Natural killer cell (primary cell): ENCODE measurements at regions of chr19 and their contacts with region 1.

Region 1: GRCh38 chr19:11125994-11126685 is 29.4 kb downstream of the SPC24 start:
- DNase-seq: peak; percentile 67 to 88
- ATAC-seq: peak; percentile 68 to 72 (median 70)
- H3K4me3 ChIP-seq: no peak overlapping the region
- H3K4me3 Mint-ChIP-seq: no peak overlapping the region
- H3K27ac ChIP-seq: no peak overlapping the region
- H3K27ac Mint-ChIP-seq: peak overlapping the region in 1 of 2 donors; percentile 45
- H3K4me1 ChIP-seq: peaks cover 5% of the 10 kb centered on the region
- H3K4me1 Mint-ChIP-seq: peaks cover 6% of the 10 kb centered on the region in 2 donors
- H3K27me3 ChIP-seq: no peaks in the 10 kb centered on the region
- H3K27me3 Mint-ChIP-seq: no peaks in the 10 kb centered on the region
- CTCF ChIP-seq: peak; percentile 79

Region 2: DNA sequence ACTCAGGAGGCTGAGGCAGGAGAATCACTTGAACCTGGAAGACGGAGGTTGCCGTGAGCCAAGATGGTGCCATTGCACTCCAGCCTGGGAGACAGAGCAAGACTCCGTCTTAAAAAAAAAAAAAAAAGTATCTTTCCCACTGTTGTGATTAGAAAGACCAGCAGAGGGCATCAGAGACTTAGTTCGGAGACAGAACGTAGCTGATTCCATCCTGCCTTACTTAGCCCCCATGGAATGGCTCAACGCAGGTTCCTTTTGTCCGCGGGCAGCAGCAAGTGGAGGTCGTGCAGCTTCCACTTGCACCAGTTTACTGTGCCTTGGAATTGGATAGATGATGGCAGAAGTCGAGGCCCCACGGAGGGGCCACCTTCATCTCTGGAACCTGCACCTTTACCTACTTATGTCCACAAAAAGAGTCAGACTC is 189.5 kb before region 1 on chr19:
- intact Hi-C with region 1: loop called (anchors 5 kb)
- DNase-seq: peak in 1 of 2 donors; percentile 80
- ATAC-seq: peak; percentile 76 to 96 (median 89)
- H3K4me3 ChIP-seq: no peak overlapping the region
- H3K4me3 Mint-ChIP-seq: no peak overlapping the region
- H3K27ac ChIP-seq: no peak overlapping the region
- H3K27ac Mint-ChIP-seq: no peak overlapping the region
- H3K4me1 ChIP-seq: peaks cover 3% of the 10 kb centered on the region
- H3K4me1 Mint-ChIP-seq: peaks cover 0 to 5% of the 10 kb centered on the region in 2 donors
- H3K27me3 ChIP-seq: no peaks in the 10 kb centered on the region
- H3K27me3 Mint-ChIP-seq: no peaks in the 10 kb centered on the region
- CTCF ChIP-seq: peak; percentile 55

Region 3: DNA sequence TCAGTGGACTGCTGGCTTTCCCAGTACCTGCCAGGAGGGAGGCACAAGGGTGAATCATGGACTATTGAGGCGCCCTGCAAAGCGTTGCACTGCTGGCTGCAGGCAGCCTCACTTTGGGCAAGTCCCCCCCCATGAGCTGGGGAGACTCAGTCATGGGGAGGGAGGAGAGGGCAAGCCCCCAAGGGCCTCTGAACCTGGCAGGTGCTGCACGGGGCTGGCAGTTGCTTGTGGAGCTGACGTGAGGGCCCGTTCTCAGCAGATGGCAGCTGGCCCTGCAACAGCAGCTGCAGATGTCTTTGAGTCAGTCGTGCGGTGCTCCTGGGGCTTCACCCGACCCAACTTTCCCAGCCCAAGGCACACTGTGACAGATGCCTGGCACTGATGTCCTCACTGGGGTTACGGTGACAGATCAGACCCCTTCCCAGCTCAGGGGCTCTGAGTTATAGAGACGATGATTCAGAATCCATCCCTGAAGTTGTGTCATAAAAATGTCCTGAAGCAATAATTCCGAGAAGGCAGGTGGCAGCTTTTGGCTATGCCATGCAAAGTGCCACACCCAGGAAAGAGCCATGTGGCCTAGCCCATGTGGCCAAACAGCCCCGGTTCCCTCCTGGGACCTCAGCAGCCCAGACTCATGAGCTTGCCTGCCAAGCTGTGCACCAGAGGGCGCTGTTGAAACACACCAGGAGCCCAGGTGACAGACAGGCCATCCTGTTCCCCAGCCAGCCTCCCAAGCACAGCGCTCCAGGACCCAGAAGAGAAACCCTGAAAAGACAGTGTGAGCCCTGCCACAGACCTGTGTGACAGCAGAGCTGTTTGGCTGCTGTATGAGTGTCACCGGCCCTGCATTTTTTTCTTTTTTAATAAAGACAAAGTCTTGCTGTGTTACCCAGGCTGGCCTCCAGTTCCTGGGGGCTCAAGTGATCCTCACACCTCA is 90.4 kb before region 1 on chr19:
- intact Hi-C with region 1: loop called (anchors 1 kb)
- DNase-seq: peak; percentile 80 to 92
- ATAC-seq: peak; percentile 74 to 88 (median 86)
- H3K4me3 ChIP-seq: no peak overlapping the region
- H3K4me3 Mint-ChIP-seq: no peak overlapping the region
- H3K27ac ChIP-seq: no peak overlapping the region
- H3K27ac Mint-ChIP-seq: peak overlapping the region in 1 of 2 donors; percentile 47
- H3K4me1 ChIP-seq: peaks cover 27% of the 10 kb centered on the region
- H3K4me1 Mint-ChIP-seq: peaks cover 18 to 20% of the 10 kb centered on the region in 2 donors
- H3K27me3 ChIP-seq: no peaks in the 10 kb centered on the region
- H3K27me3 Mint-ChIP-seq: no peaks in the 10 kb centered on the region
- CTCF ChIP-seq: peak; percentile 88

Region 4: GRCh38 chr19:11111117-11111774 is 14.9 kb before region 1 on chr19:
- intact Hi-C with region 1: no loop called
- DNase-seq: no peak
- ATAC-seq: peak in 1 of 3 donors; percentile 14
- H3K4me3 ChIP-seq: no peak overlapping the region
- H3K4me3 Mint-ChIP-seq: no peak overlapping the region
- H3K27ac ChIP-seq: no peak overlapping the region
- H3K27ac Mint-ChIP-seq: peak overlapping the region in 1 of 2 donors; percentile 16
- H3K4me1 ChIP-seq: no peaks in the 10 kb centered on the region
- H3K4me1 Mint-ChIP-seq: peaks cover 0 to 6% of the 10 kb centered on the region in 2 donors
- H3K27me3 ChIP-seq: no peaks in the 10 kb centered on the region
- H3K27me3 Mint-ChIP-seq: no peaks in the 10 kb centered on the region
- CTCF ChIP-seq: no peak

Region 5: GRCh38 chr19:11152318-11153062 is 26.4 kb after region 1 on chr19:
- intact Hi-C with region 1: no loop called
- DNase-seq: no peak
- ATAC-seq: no peak
- H3K4me3 ChIP-seq: no peak overlapping the region
- H3K4me3 Mint-ChIP-seq: no peak overlapping the region
- H3K27ac ChIP-seq: no peak overlapping the region
- H3K27ac Mint-ChIP-seq: no peak overlapping the region
- H3K4me1 ChIP-seq: peaks cover 15% of the 10 kb centered on the region
- H3K4me1 Mint-ChIP-seq: peaks cover 8 to 17% of the 10 kb centered on the region in 2 donors
- H3K27me3 ChIP-seq: no peaks in the 10 kb centered on the region
- H3K27me3 Mint-ChIP-seq: no peaks in the 10 kb centered on the region
- CTCF ChIP-seq: no peak

Region 6: DNA sequence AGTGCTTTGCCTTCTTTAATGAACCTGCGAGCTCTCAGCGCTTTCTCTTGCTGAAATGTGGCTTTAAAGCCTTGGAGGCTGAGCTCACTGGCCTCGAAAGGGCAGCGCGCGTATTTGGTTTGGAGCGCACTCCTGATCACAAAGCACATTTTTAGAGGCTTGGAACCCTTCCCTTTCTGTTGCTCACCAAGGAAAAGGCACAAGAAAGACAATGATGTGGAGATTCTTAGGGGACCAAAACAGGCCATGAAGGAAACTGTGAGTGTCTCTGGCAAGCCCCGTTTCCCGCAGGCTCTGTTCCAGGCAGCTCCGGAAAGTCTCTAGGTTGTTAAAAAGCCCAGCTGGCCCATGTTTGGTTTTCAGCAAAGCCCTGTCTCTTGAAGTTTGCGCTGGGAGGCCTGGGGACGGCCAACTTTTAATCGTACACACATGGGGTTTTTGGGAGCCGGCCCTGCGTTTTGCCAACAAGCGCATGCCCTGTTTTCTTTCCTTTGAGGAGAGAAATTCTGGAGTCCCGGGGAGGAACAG is 38.8 kb after region 1 on chr19:
- intact Hi-C with region 1: no loop called
- DNase-seq: no peak
- ATAC-seq: no peak
- H3K4me3 ChIP-seq: no peak overlapping the region
- H3K4me3 Mint-ChIP-seq: no peak overlapping the region
- H3K27ac ChIP-seq: no peak overlapping the region
- H3K27ac Mint-ChIP-seq: no peak overlapping the region
- H3K4me1 ChIP-seq: no peaks in the 10 kb centered on the region
- H3K4me1 Mint-ChIP-seq: no peaks in the 10 kb centered on the region
- H3K27me3 ChIP-seq: no peaks in the 10 kb centered on the region
- H3K27me3 Mint-ChIP-seq: no peaks in the 10 kb centered on the region
- CTCF ChIP-seq: no peak

Region 7: DNA sequence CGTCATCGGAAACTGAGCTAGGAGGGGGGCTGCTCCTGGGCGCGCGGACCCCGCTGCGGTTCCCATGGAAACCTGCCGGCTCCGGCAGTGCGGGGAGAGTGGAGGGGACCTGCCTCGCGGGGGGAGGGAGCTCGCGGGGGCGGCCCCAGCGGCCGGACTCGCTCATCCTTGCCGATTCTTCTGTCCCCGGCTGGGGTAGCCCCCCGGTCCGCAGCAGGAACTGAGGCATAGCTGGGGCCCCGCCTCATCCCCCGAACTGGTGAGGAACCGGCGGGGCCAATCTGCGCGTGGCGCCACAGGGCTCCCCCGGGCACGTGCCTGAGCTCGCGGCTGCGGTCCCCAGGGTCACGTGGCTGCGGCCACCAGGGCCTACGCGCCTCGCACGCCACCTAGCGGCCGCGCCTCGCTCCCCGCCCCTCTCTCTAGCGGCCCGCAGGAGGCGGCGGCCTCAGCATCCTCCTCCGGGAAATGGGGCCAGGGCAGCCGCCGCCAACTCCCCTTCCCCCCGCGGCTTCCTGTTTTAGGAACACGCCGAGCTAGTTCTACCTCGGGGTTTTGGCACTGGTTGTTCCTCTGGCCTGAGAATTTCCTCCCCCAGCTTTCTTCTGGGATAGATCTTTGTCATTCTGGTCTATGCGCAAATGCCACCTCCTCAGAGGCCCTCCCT is 356.4 kb after region 1 on chr19:
- intact Hi-C with region 1: loop called (anchors 5 kb)
- DNase-seq: peak; percentile 91 to 95
- ATAC-seq: peak; percentile 87 to 95 (median 91)
- H3K4me3 ChIP-seq: peak overlapping the region; percentile 5
- H3K4me3 Mint-ChIP-seq: peak overlapping the region; percentile 77
- H3K27ac ChIP-seq: no peak overlapping the region
- H3K27ac Mint-ChIP-seq: peak overlapping the region; percentile 31 to 89
- H3K4me1 ChIP-seq: peaks cover 33% of the 10 kb centered on the region
- H3K4me1 Mint-ChIP-seq: peaks cover 15 to 30% of the 10 kb centered on the region in 2 donors
- H3K27me3 ChIP-seq: peaks cover 24% of the 10 kb centered on the region
- H3K27me3 Mint-ChIP-seq: peaks cover 24 to 27% of the 10 kb centered on the region in 2 donors
- CTCF ChIP-seq: peak; percentile 90